ENCODE measurements at regions of chr17 and their contacts with region 1.

Region 1: DNA sequence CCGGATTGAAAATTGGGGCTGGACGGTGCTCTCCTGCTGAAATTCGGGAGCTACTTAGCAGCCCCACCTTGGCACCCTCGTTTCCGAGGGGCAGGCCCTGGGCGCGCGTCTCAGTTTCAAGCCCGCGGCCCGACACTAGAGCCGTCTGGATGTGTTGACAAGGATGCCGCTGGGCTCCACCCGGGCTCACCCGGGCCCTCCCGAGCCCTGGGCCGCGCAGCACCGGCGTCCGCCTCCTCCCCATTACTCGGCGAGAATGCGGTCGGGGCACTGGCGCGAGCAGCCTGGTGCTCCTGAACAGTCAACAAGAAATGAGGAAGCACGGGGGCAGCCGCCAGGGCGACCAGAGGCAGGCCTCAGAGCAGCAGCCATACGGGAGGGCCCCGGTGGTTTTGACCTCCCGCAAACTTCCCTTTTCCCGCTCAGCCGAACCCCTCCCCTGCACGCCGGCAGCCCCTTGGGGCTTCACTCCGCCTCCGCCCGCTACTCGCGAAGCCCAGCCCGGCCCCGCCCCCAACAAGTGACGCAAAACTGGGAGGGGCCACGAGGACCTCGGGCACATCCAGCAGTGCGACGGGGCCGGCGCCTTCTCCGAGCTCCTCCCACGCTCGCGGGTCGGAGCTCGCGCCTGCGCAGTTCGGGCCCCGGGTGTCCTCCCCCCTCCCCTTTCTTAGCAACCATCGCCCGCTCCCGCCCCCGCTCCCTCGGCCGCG is 447 bp upstream of the SEC14L1 start:
- DNase-seq: peak; percentile 99
- ATAC-seq: peak; percentile 83
- H3K4me3 ChIP-seq: peak overlapping the region; percentile 61
- H3K27ac ChIP-seq: peak overlapping the region; percentile 90
- H3K4me1 ChIP-seq: peaks cover 48% of the 10 kb centered on the region
- H3K27me3 ChIP-seq: no peaks in the 10 kb centered on the region
- CTCF ChIP-seq: no peak

Region 2: GRCh38 chr17:77096570-77097214 is 43.6 kb before region 1 on chr17:
- CTCF ChIA-PET with region 1: interaction called, 14 read pairs
- POLR2A ChIA-PET with region 1: interaction called, 6 read pairs
- intact Hi-C with region 1: loop called (anchors 1 kb)
- DNase-seq: peak; percentile 71
- ATAC-seq: peak; percentile 65
- H3K4me3 ChIP-seq: no peak overlapping the region
- H3K27ac ChIP-seq: no peak overlapping the region
- H3K4me1 ChIP-seq: no peaks in the 10 kb centered on the region
- H3K27me3 ChIP-seq: no peaks in the 10 kb centered on the region
- CTCF ChIP-seq: peak; percentile 86

Region 3: DNA sequence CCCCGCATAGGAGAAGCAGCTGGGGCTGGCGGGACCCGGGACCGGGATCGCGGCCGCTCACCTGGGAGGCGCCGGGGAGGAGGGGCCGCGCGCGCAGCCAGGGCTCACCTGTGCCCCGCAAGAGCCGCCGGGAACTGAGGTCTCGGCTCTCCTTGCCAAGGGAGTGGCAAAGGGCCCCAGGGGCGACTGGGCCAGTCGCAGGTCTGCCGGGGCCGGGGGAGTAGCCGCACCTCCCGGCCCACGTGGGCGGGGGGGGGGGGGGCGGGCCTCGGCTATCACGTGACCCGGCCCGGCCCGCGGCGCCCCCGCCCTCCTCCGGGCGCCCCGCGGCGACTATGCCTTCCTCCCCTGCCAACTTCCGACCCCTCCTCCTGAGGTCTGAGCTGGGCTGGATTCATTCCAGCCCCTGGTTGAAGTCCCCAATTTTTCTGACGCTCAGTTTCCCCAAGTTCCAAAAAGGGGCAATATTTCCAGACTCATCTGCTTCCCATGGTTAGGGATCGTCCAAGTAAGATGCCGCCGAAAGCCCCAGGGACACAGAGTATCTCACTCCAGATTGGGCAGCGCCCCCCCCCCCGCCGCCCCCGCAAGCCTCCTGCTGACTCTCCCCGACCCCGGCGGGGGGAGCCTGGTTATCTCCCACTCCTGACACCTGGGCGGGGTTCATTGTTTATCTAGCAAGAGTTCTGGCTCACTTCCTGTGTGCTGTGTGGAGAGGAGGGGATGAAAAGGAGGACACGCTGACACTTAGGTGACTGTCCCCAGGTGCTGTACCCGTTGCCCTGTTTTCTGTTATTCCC is 988.4 kb after region 1 on chr17 and contains the start of gene TMC6:
- CTCF ChIA-PET with region 1: no interaction called
- POLR2A ChIA-PET with region 1: interaction called, 18 read pairs
- intact Hi-C with region 1: no loop called
- DNase-seq: peak; percentile 90
- ATAC-seq: peak; percentile 61
- H3K4me3 ChIP-seq: peak within 1 kb of the TSS; percentile 95
- H3K27ac ChIP-seq: peak within 1 kb of the TSS; percentile 79
- H3K4me1 ChIP-seq: peaks cover 27% of the 10 kb centered on the region
- H3K27me3 ChIP-seq: no peaks in the 10 kb centered on the region
- CTCF ChIP-seq: no peak
- total RNA-seq, gene TMC6: 97.3 and 138 TPM in 2 replicates

Measured in PC-3 (cell line).